GM13976 (cell line): ENCODE measurements at regions of chr7 and their contacts with region 1.

Region 1: GRCh38 chr7:26667500-26668133 is 196.8 kb downstream of the SKAP2 start:
- DNase-seq: peak; percentile 22
- CTCF ChIP-seq: peak; percentile 58

Region 2: GRCh38 chr7:25894902-25895791 is 772.5 kb before region 1 on chr7:
- in situ Hi-C with region 1: loop called (anchors 25 kb)
- DNase-seq: peak; percentile 78
- CTCF ChIP-seq: peak; percentile 66

Region 3: DNA sequence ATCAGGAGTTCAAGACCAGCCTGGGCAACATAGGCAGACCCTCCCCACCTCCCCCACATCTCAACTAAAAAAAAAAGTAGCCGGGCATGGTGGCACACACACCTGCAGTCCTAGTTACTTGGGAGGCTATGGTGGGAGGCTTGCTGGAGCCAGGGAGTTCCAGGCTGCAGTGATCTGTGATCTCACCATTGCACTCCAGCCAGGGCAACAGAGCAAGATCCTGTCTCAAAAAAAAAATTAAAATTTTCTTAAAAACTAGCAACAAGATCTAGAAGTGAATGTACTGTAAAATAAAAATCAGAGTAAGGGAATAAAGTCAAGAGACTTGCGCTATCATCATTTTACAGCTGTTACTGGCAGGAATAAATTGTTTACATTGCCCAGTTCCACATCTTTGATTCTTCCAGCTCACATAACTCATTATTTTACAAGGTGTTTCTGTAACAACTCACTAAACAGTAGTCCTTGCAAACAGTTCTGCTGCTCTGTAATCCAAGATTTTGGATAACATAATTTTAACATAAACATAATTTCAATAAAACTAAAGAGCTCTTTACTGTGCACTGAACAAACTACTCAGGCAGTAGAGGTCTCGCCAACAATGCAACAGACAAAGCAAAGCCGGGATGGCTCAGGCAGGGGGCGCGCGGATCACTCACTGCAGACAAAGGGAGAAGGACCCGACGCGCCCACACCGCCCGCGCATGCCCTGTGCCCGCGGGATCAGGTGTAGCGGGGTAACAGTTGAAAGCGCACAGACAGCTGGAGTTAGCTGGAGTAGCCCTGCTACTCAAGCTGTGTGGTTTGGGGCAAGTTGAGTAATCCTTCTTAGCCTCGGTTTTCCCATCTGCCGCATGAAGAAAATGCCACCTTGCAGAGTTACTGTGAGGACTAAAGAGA is 588.9 kb before region 1 on chr7:
- in situ Hi-C with region 1: loop called (anchors 25 kb)
- DNase-seq: peak; percentile 68
- CTCF ChIP-seq: peak; percentile 60

Region 4: GRCh38 chr7:26376175-26376917 is 291.3 kb before region 1 on chr7:
- in situ Hi-C with region 1: loop called (anchors 10 kb)
- DNase-seq: peak; percentile 59
- CTCF ChIP-seq: no peak

Region 5: DNA sequence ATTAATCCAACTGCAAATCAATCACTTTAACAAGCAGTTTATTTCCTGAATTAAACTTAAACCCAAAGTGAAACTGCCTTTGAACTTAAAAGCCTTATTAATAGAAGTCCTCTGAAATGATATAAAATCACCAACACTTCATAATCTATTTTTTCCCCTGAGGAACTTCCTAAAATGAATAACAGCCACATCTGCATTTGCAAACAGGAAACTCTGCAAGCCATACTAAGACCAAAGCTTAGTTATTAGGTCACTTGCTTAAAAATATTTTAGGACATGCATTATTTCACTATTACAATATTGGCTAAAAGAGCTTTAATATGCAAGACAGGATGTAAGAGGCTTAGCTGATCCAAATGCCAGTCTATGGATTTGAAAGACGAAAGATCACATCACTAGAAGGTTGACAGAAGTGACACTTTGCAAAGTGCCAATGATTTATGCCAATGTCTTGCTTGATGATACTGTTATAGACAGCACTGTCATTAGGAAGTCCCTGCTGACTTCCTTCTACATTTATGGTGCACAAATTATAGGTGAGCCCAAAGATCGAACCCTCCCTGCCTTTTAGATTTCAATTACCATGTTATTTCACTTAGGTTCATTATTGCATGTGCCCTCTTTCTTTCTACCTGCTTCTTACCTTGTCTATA is 296.7 kb after region 1 on chr7:
- in situ Hi-C with region 1: no loop called
- DNase-seq: no peak
- CTCF ChIP-seq: no peak